ENCODE measurements at regions of chr3 and their contacts with region 1.

Region 1: GRCh38 chr3:168165390-168166269 is 69.9 kb upstream of the GOLIM4 start:
- DNase-seq: peak in 1 of 3 donors; percentile 85
- ATAC-seq: peak; percentile 82
- H3K4me3 ChIP-seq: no peak overlapping the region
- H3K4me1 ChIP-seq: no peaks in the 10 kb centered on the region
- CTCF ChIP-seq: peak; percentile 57

Region 2: GRCh38 chr3:168116279-168116678 is 49.4 kb before region 1 on chr3:
- intact Hi-C with region 1: loop called in 1 of 2 experiments (anchors 10 kb)
- DNase-seq: peak in 1 of 3 donors; percentile 27
- ATAC-seq: peak; percentile 42
- H3K4me3 ChIP-seq: no peak overlapping the region
- H3K4me1 ChIP-seq: peaks cover 14% of the 10 kb centered on the region
- CTCF ChIP-seq: no peak

Measured in mucosa of descending colon (tissue), 3 donors.